Gastrocnemius medialis (tissue), 4 donors: ENCODE measurements at regions of chr22 and their contacts with region 1.

Region 1: DNA sequence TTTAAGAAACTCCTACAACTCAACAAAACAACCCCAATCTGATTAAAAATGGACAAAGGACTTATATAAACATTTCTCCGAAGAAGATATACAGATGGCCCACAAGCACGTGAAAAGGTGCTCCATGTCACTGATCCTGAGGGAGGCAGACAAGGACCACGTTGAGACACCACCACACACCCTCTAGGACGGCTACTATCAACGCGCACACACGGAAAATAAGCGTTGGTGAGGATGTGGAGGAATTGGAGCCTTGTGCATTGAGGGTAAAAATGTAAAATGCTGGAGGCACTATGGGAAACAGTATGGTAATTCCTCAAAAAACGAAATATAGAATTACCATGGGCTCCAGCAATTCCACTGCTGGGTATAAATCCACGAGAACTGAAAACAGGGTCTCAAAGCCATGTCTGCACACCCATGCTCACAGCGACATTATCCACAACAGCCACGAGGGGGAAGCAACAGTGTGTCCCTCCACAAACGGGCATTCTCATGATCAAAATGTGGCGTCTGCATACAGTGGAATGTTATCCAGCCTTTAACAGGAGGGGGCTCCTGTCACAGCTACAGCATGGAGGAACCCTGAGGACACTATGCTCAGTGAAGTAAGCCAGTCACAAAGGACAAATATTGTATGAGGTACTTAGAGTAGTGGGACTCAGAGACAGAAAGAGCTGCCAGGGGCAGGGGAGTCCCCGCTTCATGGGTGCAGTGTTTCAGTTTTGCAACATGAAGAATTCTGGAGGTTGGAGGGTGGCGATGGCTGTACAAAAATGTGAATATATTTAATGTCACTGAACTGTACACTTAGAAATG is 22.5 kb downstream of the YPEL1 start:
- DNase-seq: peak; percentile 42 to 62
- ATAC-seq: peak; percentile 63 to 71
- H3K4me3 ChIP-seq: peak overlapping the region in 2 of 4 donors; percentile 4 to 16
- H3K27ac ChIP-seq: peak overlapping the region; percentile 75 to 82 (median 81)
- H3K4me1 ChIP-seq: peaks cover 31 to 48% of the 10 kb centered on the region in 2 donors
- H3K27me3 ChIP-seq: no peaks in the 10 kb centered on the region
- CTCF ChIP-seq: peak; percentile 74 to 78 (median 77)
- POLR2A ChIP-seq: no peak

Region 2: GRCh38 chr22:21735200-21736076 is 22.3 kb after region 1 on chr22 and contains the start of gene YPEL1:
- in situ Hi-C with region 1: no loop called
- intact Hi-C with region 1: loop called (anchors 1 kb)
- DNase-seq: peak; percentile 92 to 96
- ATAC-seq: peak; percentile 86 to 88
- H3K4me3 ChIP-seq: peak within 1 kb of the TSS; percentile 61 to 74 (median 70)
- H3K27ac ChIP-seq: peak within 1 kb of the TSS; percentile 83 to 91 (median 87)
- H3K4me1 ChIP-seq: peaks cover 9 to 16% of the 10 kb centered on the region in 2 donors
- H3K27me3 ChIP-seq: no peaks in the 10 kb centered on the region
- CTCF ChIP-seq: peak in 3 of 5 experiments; percentile 12 to 26 (median 14)
- POLR2A ChIP-seq: peak; percentile 99 to 100
- total RNA-seq, gene YPEL1: 23.6 to 42.1 (median 36.4) TPM

Region 3: GRCh38 chr22:21837248-21837979 is 124.3 kb after region 1 on chr22:
- in situ Hi-C with region 1: no loop called
- intact Hi-C with region 1: loop called (anchors 5 kb)
- DNase-seq: no peak
- ATAC-seq: peak; percentile 92 to 93
- H3K4me3 ChIP-seq: no peak overlapping the region
- H3K27ac ChIP-seq: peak overlapping the region; percentile 77 to 87 (median 81)
- H3K4me1 ChIP-seq: peaks cover 50 to 57% of the 10 kb centered on the region in 2 donors
- H3K27me3 ChIP-seq: no peaks in the 10 kb centered on the region
- CTCF ChIP-seq: no peak
- POLR2A ChIP-seq: no peak

Region 4: GRCh38 chr22:21850660-21851059 is 137.6 kb after region 1 on chr22:
- in situ Hi-C with region 1: no loop called
- intact Hi-C with region 1: loop called (anchors 5 kb)
- DNase-seq: no peak
- ATAC-seq: no peak
- H3K4me3 ChIP-seq: no peak overlapping the region
- H3K27ac ChIP-seq: peak overlapping the region; percentile 59 to 87 (median 67)
- H3K4me1 ChIP-seq: peaks cover 33 to 64% of the 10 kb centered on the region in 2 donors
- H3K27me3 ChIP-seq: no peaks in the 10 kb centered on the region
- CTCF ChIP-seq: no peak
- POLR2A ChIP-seq: no peak

Region 5: GRCh38 chr22:21867528-21868266 is 154.6 kb after region 1 on chr22 and contains the start of gene MAPK1:
- in situ Hi-C with region 1: no loop called
- intact Hi-C with region 1: loop called (anchors 2 kb)
- DNase-seq: peak; percentile 91
- ATAC-seq: peak; percentile 91 to 95
- H3K4me3 ChIP-seq: peak within 1 kb of the TSS; percentile 83 to 95 (median 90)
- H3K27ac ChIP-seq: peak within 1 kb of the TSS; percentile 86 to 93 (median 90)
- H3K4me1 ChIP-seq: peaks cover 35 to 43% of the 10 kb centered on the region in 2 donors
- H3K27me3 ChIP-seq: no peaks in the 10 kb centered on the region
- CTCF ChIP-seq: peak in 4 of 5 experiments; percentile 26 to 49 (median 42)
- POLR2A ChIP-seq: peak; percentile 94 to 95
- total RNA-seq, gene MAPK1: 39.8 to 79.5 (median 57.2) TPM

Region 6: GRCh38 chr22:21938071-21938822 is 225.1 kb after region 1 on chr22:
- in situ Hi-C with region 1: loop called (anchors 5 to 10 kb)
- intact Hi-C with region 1: loop called (anchors 1 kb)
- DNase-seq: peak; percentile 84 to 91
- ATAC-seq: peak; percentile 88 to 90
- H3K4me3 ChIP-seq: peak overlapping the region; percentile 53 to 68 (median 62)
- H3K27ac ChIP-seq: peak overlapping the region; percentile 79 to 90 (median 86)
- H3K4me1 ChIP-seq: peaks cover 55 to 61% of the 10 kb centered on the region in 2 donors
- H3K27me3 ChIP-seq: no peaks in the 10 kb centered on the region
- CTCF ChIP-seq: peak; percentile 95 to 100 (median 99)
- POLR2A ChIP-seq: no peak

Region 7: DNA sequence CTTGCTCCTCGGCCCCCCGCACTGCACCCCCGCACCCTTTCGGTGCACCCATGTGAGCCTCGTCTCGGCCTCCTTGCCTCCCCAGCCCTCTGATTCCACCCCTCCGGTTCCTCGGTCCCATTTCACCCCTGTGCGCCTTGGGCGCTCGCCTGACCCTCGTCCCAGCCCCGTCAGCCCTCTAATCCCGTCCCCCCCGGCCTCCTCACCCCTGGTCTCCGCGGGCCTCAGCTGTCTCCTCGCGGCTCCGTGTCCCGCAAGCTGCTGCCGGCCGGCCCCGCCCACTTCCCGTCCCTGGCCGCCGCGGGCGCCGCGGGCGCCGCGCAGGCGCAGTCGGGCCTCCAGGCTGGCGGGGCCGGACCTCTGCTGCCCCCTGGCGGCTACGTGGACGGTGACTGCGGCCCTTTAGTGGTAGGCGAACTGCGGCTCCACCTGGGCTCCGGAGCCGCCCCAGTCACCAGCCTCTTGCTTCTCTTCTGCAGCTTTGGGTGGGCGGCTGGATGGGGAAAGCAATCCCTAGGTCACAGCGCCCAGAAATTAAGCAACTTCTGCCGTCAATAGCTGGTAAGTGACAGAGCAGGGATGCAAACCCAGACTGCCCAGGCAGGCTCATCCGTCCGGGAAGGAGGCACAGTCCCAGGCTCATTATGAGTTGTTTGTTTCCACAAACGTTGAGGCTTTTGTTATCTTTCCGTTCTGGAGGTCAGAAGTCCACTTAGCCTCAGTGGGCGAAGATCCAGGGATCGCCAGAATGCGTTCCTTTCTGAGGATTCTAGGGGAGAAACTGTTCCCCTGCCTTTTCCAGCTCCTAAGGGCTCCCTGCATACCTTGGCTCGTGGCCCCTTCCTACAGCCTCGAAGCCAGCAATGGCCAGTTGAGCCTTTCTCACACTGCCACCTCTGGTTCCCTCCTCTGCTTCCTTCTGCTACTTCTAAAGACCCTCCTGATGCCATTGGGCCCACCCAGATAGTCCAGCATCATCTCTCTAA is 239.8 kb after region 1 on chr22 and contains the start of gene PPM1F:
- in situ Hi-C with region 1: loop called in 2 of 4 experiments (anchors 10 kb)
- intact Hi-C with region 1: loop called (anchors 2 kb)
- DNase-seq: peak; percentile 75
- ATAC-seq: peak; percentile 74 to 89
- H3K4me3 ChIP-seq: peak within 1 kb of the TSS; percentile 58 to 79 (median 75)
- H3K27ac ChIP-seq: peak within 1 kb of the TSS; percentile 61 to 85 (median 78)
- H3K4me1 ChIP-seq: peaks cover 26 to 28% of the 10 kb centered on the region in 2 donors
- H3K27me3 ChIP-seq: no peaks in the 10 kb centered on the region
- CTCF ChIP-seq: peak; percentile 80 to 99 (median 99)
- POLR2A ChIP-seq: peak; percentile 37 to 41
- total RNA-seq, gene PPM1F: 10.2 to 13.8 (median 11.0) TPM